ENCODE measurements at regions of chr10 and their contacts with region 1.

Region 1: GRCh38 chr10:7408291-7409044 is 2.4 kb downstream of the SFMBT2 start:
- DNase-seq: peak; percentile 84
- ATAC-seq: peak; percentile 77

Region 2: DNA sequence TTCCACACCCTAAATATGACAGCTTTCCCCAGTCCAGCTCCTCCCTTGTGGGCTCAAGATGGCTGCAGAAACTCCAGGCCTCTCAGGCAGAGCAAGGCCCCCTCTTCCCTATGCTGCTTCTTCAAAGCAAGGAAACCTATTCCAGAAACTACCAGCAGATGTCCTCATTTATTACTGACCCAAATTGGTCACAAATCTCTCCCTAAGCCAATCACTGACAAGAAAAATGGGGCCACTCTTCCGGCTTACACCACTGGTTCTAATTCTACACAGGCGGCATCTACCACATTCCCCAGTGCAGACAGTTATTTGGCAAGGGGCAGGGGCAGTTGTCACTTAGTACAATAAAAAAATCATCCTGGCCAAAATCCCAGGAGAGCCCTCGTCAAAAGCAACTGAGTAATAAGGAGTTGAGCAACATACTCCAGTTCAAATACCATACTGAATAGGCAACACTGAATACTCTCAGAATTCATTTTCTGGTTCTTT is 148.0 kb before region 1 on chr10:
- intact Hi-C with region 1: loop called (anchors 1 kb)
- DNase-seq: peak; percentile 57
- ATAC-seq: peak; percentile 96

Region 3: DNA sequence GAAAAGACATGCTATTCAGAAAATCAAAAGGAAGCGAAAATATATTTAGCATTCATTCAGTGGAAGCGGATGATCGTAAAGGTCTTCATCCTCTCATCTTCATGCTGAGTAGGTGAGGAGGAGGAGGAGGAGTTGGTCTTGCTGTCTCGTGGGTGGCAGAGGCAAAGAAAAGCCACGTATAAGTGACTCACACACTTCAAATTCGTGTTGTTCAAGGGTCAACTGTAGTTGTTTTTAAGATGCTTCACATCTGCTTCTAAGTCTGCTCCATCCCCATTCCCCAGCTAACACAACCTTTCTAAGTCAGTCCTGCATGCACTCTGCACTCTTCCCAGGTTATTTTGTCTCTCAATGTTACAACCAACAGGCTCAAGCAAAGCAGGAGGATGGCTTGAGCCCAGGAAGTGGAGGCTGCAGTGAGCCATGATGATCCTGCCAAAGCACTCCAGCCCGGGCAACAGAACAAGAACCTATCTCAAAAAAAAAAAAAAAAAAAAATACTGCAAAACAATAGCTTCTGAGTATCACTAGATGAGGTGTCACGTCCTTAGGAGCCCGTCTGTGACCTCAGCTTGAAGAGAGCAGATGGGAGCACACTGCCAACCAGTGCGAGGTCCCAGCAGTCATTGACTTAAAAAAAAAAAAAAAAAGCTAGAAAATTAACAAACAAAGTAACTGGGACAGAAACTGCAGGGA is 68.1 kb before region 1 on chr10:
- intact Hi-C with region 1: loop called (anchors 10 kb)
- DNase-seq: peak; percentile 50
- ATAC-seq: peak; percentile 90